ENCODE measurements at regions of chr1 and their contacts with region 1.

Region 1: GRCh38 chr1:63917571-63918417 is 144.0 kb downstream of the ROR1 start:
- DNase-seq: no peak
- H3K4me3 ChIP-seq: no peak overlapping the region
- H3K27ac ChIP-seq: no peak overlapping the region
- H3K4me1 ChIP-seq: peaks cover 35% of the 10 kb centered on the region
- H3K27me3 ChIP-seq: no peaks in the 10 kb centered on the region
- CTCF ChIP-seq: peak; percentile 31 to 33

Region 2: GRCh38 chr1:63615768-63616420 is 301.9 kb before region 1 on chr1:
- CTCF ChIA-PET with region 1: no interaction called
- dilution Hi-C with region 1: no loop called
- in situ Hi-C with region 1: no loop called
- intact Hi-C with region 1: loop called (anchors 5 kb)
- DNase-seq: peak; percentile 58
- H3K4me3 ChIP-seq: no peak overlapping the region
- H3K27ac ChIP-seq: no peak overlapping the region
- H3K4me1 ChIP-seq: peaks cover 4% of the 10 kb centered on the region
- H3K27me3 ChIP-seq: no peaks in the 10 kb centered on the region
- CTCF ChIP-seq: peak; percentile 60 to 75

Region 3: GRCh38 chr1:63674238-63674864 is 243.4 kb before region 1 on chr1:
- CTCF ChIA-PET with region 1: no interaction called
- dilution Hi-C with region 1: no loop called
- in situ Hi-C with region 1: no loop called
- intact Hi-C with region 1: loop called (anchors 5 kb)
- DNase-seq: peak; percentile 85
- H3K4me3 ChIP-seq: no peak overlapping the region
- H3K27ac ChIP-seq: no peak overlapping the region
- H3K4me1 ChIP-seq: peaks cover 13% of the 10 kb centered on the region
- H3K27me3 ChIP-seq: no peaks in the 10 kb centered on the region
- CTCF ChIP-seq: peak; percentile 76 to 77

Region 4: DNA sequence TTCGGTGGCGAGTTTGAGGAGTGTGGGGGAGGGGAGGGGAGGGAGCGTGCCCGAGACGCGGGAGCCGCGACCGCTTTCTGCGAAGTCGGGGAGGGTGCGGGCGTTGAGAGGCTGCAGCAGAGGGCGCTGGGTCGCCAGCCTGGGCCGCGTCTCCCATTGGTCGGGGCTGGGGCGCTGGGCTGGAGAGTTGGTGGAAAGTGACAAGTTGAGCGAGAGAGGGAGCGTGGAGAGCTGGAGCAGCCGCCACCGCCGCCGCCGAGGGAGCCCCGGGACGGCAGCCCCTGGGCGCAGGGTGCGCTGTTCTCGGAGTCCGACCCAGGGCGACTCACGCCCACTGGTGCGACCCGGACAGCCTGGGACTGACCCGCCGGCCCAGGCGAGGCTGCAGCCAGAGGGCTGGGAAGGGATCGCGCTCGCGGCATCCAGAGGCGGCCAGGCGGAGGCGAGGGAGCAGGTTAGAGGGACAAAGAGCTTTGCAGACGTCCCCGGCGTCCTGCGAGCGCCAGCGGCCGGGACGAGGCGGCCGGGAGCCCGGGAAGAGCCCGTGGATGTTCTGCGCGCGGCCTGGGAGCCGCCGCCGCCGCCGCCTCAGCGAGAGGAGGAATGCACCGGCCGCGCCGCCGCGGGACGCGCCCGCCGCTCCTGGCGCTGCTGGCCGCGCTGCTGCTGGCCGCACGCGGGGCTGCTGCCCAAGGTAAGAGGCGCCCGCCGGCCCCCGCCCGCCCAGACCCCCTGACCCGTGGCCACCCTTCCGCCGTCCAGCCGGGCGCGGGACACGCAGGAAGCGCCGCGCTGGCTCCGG is 143.8 kb before region 1 on chr1 and contains the start of gene ROR1:
- CTCF ChIA-PET with region 1: interaction called, 7 read pairs
- dilution Hi-C with region 1: no loop called
- in situ Hi-C with region 1: no loop called
- intact Hi-C with region 1: loop called (anchors 1 kb)
- DNase-seq: peak; percentile 82
- H3K4me3 ChIP-seq: peak within 1 kb of the TSS; percentile 87 to 93 (median 90)
- H3K27ac ChIP-seq: peak within 1 kb of the TSS; percentile 48
- H3K4me1 ChIP-seq: peaks cover 29% of the 10 kb centered on the region
- H3K27me3 ChIP-seq: no peaks in the 10 kb centered on the region
- CTCF ChIP-seq: peak; percentile 23 to 84
- total RNA-seq, gene ROR1: 11.5 to 21.8 TPM

Region 5: GRCh38 chr1:63821091-63822005 is 96.4 kb before region 1 on chr1:
- CTCF ChIA-PET with region 1: no interaction called
- dilution Hi-C with region 1: loop called (anchors 5 kb)
- in situ Hi-C with region 1: no loop called
- intact Hi-C with region 1: no loop called
- DNase-seq: peak; percentile 53
- H3K4me3 ChIP-seq: no peak overlapping the region
- H3K27ac ChIP-seq: no peak overlapping the region
- H3K4me1 ChIP-seq: peaks cover 21% of the 10 kb centered on the region
- H3K27me3 ChIP-seq: no peaks in the 10 kb centered on the region
- CTCF ChIP-seq: no peak

Region 6: GRCh38 chr1:63950023-63950422 is 32.2 kb after region 1 on chr1:
- CTCF ChIA-PET with region 1: no interaction called
- dilution Hi-C with region 1: no loop called
- in situ Hi-C with region 1: no loop called
- intact Hi-C with region 1: no loop called
- DNase-seq: peak; percentile 12
- H3K4me3 ChIP-seq: no peak overlapping the region
- H3K27ac ChIP-seq: no peak overlapping the region
- H3K4me1 ChIP-seq: peaks cover 18% of the 10 kb centered on the region
- H3K27me3 ChIP-seq: no peaks in the 10 kb centered on the region
- CTCF ChIP-seq: no peak

Region 7: GRCh38 chr1:64038965-64039926 is 121.5 kb after region 1 on chr1:
- CTCF ChIA-PET with region 1: no interaction called
- dilution Hi-C with region 1: no loop called
- in situ Hi-C with region 1: no loop called
- intact Hi-C with region 1: loop called (anchors 5 kb)
- DNase-seq: peak; percentile 100
- H3K4me3 ChIP-seq: no peak overlapping the region
- H3K27ac ChIP-seq: peak overlapping the region; percentile 78
- H3K4me1 ChIP-seq: peaks cover 57% of the 10 kb centered on the region
- H3K27me3 ChIP-seq: no peaks in the 10 kb centered on the region
- CTCF ChIP-seq: no peak

Measured in mammary epithelial cell (primary cell).